MCF 10A (cell line): ENCODE measurements at regions of chr1 and their contacts with region 1.

Region 1: DNA sequence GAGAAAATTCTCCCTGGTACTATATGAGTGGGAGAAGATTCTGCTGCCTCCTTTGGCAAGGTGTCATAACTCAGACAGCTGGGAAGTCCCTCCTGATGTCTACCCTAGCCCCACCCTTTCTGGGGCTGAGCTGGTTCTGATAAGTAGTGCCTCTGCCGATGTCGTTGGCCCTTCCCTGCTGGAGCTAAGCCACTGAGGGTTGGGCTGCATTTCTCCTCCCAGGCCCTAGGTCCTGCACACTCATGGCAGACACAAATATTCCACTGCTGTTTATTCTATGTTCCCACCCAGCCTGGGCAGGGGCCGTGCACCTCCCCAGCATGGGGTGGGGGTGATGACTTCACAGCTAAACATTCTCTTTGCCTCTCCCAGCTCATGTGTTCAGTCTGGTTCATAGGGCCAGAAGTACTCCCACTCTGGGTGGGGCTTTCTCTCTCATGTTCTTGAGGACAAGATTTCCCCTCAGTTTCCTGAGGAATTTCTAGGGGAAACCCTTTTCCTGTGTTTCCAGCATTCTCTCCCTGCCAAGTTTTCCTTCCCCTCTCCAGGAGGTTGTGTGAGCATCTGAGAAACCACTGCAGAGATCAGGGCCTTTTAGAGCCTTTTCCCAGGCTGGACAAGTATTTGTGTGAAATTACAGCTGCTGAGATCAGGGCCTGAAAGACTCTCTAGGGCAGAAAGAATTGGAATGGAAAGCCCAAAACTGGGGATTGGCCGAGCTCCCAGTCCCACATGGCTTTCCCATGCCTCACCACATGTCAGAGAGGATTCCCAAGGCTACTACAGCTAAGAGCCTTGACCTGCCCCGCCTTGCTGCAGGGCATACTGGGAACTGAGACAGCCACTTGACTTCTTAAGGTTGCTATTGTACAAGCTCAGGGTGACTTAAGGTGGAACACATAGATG is 66.2 kb downstream of the ATP2B4 start:
- DNase-seq: peak; percentile 99
- H3K4me3 Mint-ChIP-seq: peak overlapping the region; percentile 61
- H3K27ac Mint-ChIP-seq: peak overlapping the region; percentile 96
- H3K4me1 Mint-ChIP-seq: peaks cover 37% of the 10 kb centered on the region
- H3K27me3 Mint-ChIP-seq: no peaks in the 10 kb centered on the region
- CTCF ChIP-seq: no peak

Region 2: DNA sequence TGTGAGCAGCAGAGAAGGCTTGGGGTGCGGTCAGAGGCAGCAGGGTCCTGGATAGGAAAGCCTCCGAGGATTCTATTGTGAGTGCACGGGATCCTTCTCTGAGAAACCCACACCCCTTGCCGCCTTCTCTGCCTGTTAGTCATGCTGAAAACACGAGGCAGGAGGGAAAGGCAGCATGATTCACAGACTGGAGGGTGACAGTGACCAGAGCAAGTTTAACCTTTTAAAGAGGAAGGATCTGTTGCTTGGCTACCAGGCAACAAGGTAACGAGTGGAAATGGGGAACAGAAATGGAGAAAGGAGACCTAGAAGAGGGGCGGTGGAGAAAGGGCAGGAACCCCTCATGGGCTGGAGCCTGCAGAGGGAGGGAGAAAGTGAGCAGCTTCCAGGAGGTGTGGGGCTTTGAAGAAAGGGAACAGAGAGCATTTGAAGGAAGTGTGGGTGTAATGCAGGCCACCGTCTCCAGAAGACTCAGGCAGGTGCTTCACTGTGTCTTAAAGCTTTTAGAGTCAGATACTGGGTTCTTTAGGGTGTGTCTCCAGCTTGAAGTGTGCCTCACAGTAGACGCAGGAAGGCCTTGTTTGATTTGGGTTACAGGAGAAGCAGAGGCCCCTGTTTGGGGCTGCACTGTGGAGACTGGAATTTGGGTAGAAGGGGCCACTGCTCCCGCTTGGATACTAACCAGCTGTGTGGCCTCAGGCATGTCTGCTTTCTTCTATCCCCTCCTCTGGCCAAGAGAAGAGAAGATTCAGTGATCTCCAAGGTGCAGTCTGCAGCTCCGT is 179.8 kb before region 1 on chr1:
- CTCF ChIA-PET with region 1: interaction called, 552 read pairs
- POLR2A ChIA-PET with region 1: interaction called, 14 read pairs
- intact Hi-C with region 1: loop called (anchors 1 kb)
- DNase-seq: peak; percentile 96
- H3K4me3 Mint-ChIP-seq: peak overlapping the region; percentile 47
- H3K27ac Mint-ChIP-seq: peak overlapping the region; percentile 93
- H3K4me1 Mint-ChIP-seq: peaks cover 45% of the 10 kb centered on the region
- H3K27me3 Mint-ChIP-seq: no peaks in the 10 kb centered on the region
- CTCF ChIP-seq: no peak

Region 3: GRCh38 chr1:203558064-203558760 is 134.6 kb before region 1 on chr1:
- CTCF ChIA-PET with region 1: interaction called, 3 read pairs
- POLR2A ChIA-PET with region 1: interaction called, 26 read pairs
- intact Hi-C with region 1: loop called (anchors 1 kb)
- DNase-seq: peak; percentile 99
- H3K4me3 Mint-ChIP-seq: no peak overlapping the region
- H3K27ac Mint-ChIP-seq: peak overlapping the region; percentile 44
- H3K4me1 Mint-ChIP-seq: peaks cover 27% of the 10 kb centered on the region
- H3K27me3 Mint-ChIP-seq: no peaks in the 10 kb centered on the region
- CTCF ChIP-seq: no peak

Region 4: DNA sequence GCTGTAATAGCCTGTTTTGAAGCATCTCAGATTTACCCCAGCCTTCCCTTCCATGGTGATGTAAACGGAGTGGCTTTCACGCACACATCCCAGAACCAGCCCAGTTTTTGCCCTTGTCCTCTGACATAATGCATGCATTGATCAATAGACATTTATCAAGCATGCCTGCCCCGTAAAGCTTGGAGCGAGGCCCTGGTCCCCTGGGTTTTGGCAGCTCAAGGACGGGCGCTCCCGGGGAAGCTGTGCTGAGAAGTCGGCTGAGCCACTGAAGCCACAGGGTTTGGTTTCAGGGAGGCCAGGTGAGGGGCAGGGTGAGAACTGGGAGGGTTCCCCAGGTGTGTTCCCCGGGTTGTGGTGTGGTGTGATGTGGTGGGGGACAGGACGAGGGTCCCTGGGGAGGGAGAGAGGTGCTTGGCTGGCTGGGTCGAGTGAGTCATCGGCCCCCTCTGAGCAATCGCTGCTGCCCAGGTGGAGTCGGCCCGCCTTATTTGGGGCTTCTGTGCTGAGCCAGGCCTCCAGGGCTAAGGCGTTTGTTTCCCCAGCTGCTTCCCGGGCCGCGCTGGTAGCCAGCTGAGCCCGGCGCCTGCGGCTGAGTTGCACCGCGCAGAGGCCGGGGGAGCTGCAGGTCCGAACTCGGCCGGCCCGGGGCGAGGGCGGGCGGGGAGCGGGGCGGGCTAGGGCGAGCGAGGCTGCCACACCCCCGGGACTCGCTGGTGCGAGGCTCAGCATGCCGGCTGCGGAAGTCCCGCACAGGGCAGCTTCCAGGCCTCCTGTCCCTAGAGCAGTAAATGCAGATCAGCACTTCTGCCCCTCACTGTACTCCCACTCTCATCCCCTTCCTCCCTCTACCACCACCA is 42.6 kb before region 1 on chr1:
- CTCF ChIA-PET with region 1: interaction called, 5 read pairs
- POLR2A ChIA-PET with region 1: interaction called, 21 read pairs
- intact Hi-C with region 1: no loop called
- DNase-seq: peak; percentile 88
- H3K4me3 Mint-ChIP-seq: peak overlapping the region; percentile 31
- H3K27ac Mint-ChIP-seq: peak overlapping the region; percentile 53
- H3K4me1 Mint-ChIP-seq: peaks cover 23% of the 10 kb centered on the region
- H3K27me3 Mint-ChIP-seq: no peaks in the 10 kb centered on the region
- CTCF ChIP-seq: no peak

Region 5: DNA sequence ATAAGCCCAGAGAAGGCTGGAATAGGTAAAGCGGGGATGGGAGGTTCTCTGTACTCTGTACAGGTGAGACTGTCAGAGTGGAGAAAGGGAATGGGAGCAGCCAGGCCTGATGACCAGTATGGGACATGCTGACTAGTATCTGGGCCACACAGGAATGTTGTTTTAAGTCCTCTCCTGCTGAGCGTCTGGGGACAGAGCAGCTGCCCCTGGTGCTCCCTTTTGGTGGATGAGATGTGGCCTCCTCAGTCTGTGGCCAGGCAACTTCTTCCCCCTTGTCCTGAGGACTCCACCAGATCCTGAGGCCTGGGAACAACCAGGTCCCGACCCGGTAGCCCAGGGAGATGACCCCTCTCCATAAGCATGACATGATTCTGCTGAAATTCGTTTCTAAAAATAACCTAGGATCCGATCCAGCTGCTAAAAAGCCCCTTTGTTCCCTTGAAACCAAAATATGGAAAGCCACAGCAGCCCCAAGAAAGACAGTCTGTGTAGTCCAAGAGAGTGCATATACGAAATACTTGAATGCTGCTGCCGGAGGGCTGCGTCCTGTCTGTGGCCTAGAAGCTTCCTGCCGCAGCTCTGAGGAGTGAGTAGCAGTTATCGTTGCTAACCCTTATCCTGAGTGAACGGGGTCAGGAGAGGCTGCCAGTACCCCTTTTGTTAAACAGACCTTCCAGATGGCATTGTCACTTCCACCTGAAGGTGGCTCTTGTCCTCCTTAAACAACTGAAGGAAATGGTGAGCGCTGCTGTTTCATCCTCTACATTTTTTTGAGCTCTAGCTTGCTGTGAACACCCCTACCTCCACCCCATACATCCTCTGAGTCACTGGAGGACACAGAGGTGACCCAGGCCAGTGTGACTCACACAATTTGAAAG is 19.0 kb before region 1 on chr1:
- CTCF ChIA-PET with region 1: interaction called, 30 read pairs
- POLR2A ChIA-PET with region 1: interaction called, 19 read pairs
- intact Hi-C with region 1: loop called (anchors 1 kb)
- DNase-seq: peak; percentile 99
- H3K4me3 Mint-ChIP-seq: peak overlapping the region; percentile 1
- H3K27ac Mint-ChIP-seq: peak overlapping the region; percentile 6
- H3K4me1 Mint-ChIP-seq: peaks cover 36% of the 10 kb centered on the region
- H3K27me3 Mint-ChIP-seq: no peaks in the 10 kb centered on the region
- CTCF ChIP-seq: peak; percentile 39

Region 6: GRCh38 chr1:203769505-203770343 is 76.9 kb after region 1 on chr1:
- CTCF ChIA-PET with region 1: interaction called, 6 read pairs
- POLR2A ChIA-PET with region 1: interaction called, 13 read pairs
- intact Hi-C with region 1: no loop called
- DNase-seq: peak; percentile 99
- H3K4me3 Mint-ChIP-seq: peak overlapping the region; percentile 63
- H3K27ac Mint-ChIP-seq: peak overlapping the region; percentile 88
- H3K4me1 Mint-ChIP-seq: peaks cover 32% of the 10 kb centered on the region
- H3K27me3 Mint-ChIP-seq: no peaks in the 10 kb centered on the region
- CTCF ChIP-seq: no peak

Region 7: GRCh38 chr1:203968728-203969127 is 275.9 kb after region 1 on chr1:
- CTCF ChIA-PET with region 1: no interaction called
- POLR2A ChIA-PET with region 1: no interaction called
- intact Hi-C with region 1: no loop called
- DNase-seq: peak; percentile 16
- H3K4me3 Mint-ChIP-seq: no peak overlapping the region
- H3K27ac Mint-ChIP-seq: no peak overlapping the region
- H3K4me1 Mint-ChIP-seq: no peaks in the 10 kb centered on the region
- H3K27me3 Mint-ChIP-seq: no peaks in the 10 kb centered on the region
- CTCF ChIP-seq: no peak